ENCODE measurements at regions of chr14 and their contacts with region 1.

Region 1: DNA sequence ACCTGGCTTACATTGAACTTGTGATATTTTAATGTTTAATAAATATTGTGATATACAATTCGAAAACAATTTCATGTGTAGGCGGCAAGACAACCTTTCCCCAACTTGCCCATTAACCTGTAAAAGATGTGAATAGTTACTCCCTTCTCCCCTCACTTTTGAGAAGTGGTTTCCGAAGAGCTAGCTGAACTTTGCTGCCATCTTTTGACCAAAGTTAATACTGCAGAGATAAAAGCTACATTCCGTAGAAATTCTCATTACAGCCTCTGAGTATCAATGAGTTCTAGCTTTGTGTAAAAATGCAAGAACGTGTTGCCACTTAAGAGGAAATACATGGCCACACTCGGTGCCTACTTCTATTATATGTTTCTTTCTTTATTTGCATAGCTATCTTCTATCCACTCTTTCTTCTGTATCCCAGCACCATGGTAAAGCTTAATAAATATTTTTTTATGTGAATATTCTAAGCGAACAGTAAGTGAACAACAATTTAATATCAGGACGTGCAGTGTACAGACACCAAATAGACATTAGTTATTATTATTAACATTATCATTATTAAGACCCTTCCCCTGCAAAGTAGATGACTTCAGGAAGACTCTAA is 105.1 kb upstream of the TMEM260 start:
- DNase-seq: peak in 1 of 2 donors; percentile 67
- ATAC-seq: peak in 2 of 3 donors; percentile 59 to 74
- H3K4me3 ChIP-seq: no peak overlapping the region
- H3K4me3 Mint-ChIP-seq: no peak overlapping the region
- H3K27ac ChIP-seq: no peak overlapping the region
- H3K27ac Mint-ChIP-seq: no peak overlapping the region
- H3K4me1 ChIP-seq: no peaks in the 10 kb centered on the region
- H3K4me1 Mint-ChIP-seq: no peaks in the 10 kb centered on the region
- H3K27me3 ChIP-seq: no peaks in the 10 kb centered on the region
- H3K27me3 Mint-ChIP-seq: peaks cover 0 to 6% of the 10 kb centered on the region in 2 donors
- CTCF ChIP-seq: peak; percentile 78

Region 2: DNA sequence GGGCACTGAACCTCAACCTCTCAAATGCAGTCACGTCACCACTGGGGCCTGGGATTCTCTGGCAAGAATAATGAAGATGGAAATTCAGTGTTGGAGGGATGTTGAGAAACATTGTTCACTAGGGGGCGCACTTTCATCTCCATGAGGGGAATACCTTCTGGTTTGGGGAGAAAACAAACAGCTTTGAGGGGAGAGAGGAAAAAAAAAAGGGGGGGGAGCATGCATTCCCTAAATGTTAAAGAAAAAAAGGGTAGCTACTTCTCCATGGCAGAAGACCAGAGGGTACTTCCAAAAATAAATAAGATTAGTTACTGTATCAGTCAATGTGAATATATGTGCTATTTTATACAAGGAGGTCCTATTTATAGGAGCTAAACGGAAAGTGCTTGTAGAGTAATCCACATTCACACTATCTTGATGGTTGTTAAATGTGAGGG is 1028.3 kb before region 1 on chr14:
- intact Hi-C with region 1: loop called (anchors 1 kb)
- DNase-seq: peak in 1 of 2 donors; percentile 81
- ATAC-seq: peak; percentile 50 to 55 (median 52)
- H3K4me3 ChIP-seq: no peak overlapping the region
- H3K4me3 Mint-ChIP-seq: no peak overlapping the region
- H3K27ac ChIP-seq: no peak overlapping the region
- H3K27ac Mint-ChIP-seq: no peak overlapping the region
- H3K4me1 ChIP-seq: no peaks in the 10 kb centered on the region
- H3K4me1 Mint-ChIP-seq: no peaks in the 10 kb centered on the region
- H3K27me3 ChIP-seq: no peaks in the 10 kb centered on the region
- H3K27me3 Mint-ChIP-seq: no peaks in the 10 kb centered on the region
- CTCF ChIP-seq: peak; percentile 80

Region 3: DNA sequence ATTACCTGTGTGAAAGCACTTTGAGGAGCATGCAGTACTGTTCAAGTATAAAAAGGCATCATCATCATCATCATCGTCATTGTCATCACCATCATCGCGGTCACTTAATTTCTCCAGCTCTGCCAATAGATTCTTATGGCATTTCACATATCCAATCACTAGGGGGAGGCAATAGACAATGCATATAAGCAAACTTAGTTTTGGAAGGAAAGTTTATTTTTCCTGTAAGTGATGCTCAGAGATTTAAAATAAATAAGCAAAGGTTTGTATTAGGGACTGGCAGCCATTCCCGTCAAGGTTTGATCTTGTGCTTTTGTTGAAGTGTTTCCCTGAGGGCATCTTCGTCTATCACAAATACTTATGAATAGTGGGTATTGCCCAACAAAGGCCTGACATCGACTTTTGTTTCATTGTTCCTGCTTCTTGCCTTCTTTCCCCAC is 767.1 kb before region 1 on chr14:
- intact Hi-C with region 1: loop called (anchors 1 kb)
- DNase-seq: peak in 1 of 2 donors; percentile 40
- ATAC-seq: no peak
- H3K4me3 ChIP-seq: no peak overlapping the region
- H3K4me3 Mint-ChIP-seq: no peak overlapping the region
- H3K27ac ChIP-seq: no peak overlapping the region
- H3K27ac Mint-ChIP-seq: no peak overlapping the region
- H3K4me1 ChIP-seq: no peaks in the 10 kb centered on the region
- H3K4me1 Mint-ChIP-seq: no peaks in the 10 kb centered on the region
- H3K27me3 ChIP-seq: no peaks in the 10 kb centered on the region
- H3K27me3 Mint-ChIP-seq: no peaks in the 10 kb centered on the region
- CTCF ChIP-seq: peak; percentile 38

Region 4: DNA sequence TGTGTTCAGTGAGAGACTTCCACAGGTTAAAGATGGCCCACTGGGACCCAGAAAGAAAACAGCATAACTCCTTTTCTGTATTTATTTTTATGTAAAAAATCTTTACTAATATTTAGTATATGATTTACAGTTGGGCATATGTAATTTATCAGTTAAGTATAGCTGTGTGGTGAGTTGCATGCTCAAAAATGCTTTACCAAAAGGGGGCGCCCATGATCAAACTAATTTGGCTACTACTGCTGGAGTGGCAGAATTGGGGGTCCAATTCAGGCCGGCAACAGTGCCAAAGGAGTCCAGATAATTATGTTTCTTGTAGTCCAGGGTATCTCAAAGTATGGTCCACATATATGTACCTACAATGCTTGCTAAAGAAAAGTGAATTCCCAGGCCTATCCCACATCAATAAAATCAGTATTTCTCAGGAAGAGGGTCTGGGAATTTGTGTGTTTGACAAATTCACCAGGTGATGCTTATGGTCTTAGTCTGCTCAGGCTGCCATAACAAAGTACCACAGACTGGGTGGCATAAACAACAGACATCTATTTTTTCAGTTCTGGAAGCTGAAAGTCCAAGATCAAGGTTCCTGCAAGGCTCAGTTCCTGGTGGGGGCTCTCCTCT is 742.5 kb before region 1 on chr14:
- intact Hi-C with region 1: loop called (anchors 1 kb)
- DNase-seq: peak; percentile 34 to 69
- ATAC-seq: peak in 1 of 3 donors; percentile 61
- H3K4me3 ChIP-seq: no peak overlapping the region
- H3K4me3 Mint-ChIP-seq: no peak overlapping the region
- H3K27ac ChIP-seq: no peak overlapping the region
- H3K27ac Mint-ChIP-seq: no peak overlapping the region
- H3K4me1 ChIP-seq: no peaks in the 10 kb centered on the region
- H3K4me1 Mint-ChIP-seq: peaks cover 6 to 29% of the 10 kb centered on the region in 2 donors
- H3K27me3 ChIP-seq: no peaks in the 10 kb centered on the region
- H3K27me3 Mint-ChIP-seq: no peaks in the 10 kb centered on the region
- CTCF ChIP-seq: peak; percentile 86

Region 5: GRCh38 chr14:56280843-56281242 is 193.7 kb before region 1 on chr14:
- intact Hi-C with region 1: no loop called
- DNase-seq: no peak
- ATAC-seq: no peak
- H3K4me3 ChIP-seq: no peak overlapping the region
- H3K4me3 Mint-ChIP-seq: no peak overlapping the region
- H3K27ac ChIP-seq: no peak overlapping the region
- H3K27ac Mint-ChIP-seq: no peak overlapping the region
- H3K4me1 ChIP-seq: no peaks in the 10 kb centered on the region
- H3K4me1 Mint-ChIP-seq: no peaks in the 10 kb centered on the region
- H3K27me3 ChIP-seq: no peaks in the 10 kb centered on the region
- H3K27me3 Mint-ChIP-seq: no peaks in the 10 kb centered on the region
- CTCF ChIP-seq: no peak